ENCODE measurements at regions of chr11 and their contacts with region 1.

Region 1: DNA sequence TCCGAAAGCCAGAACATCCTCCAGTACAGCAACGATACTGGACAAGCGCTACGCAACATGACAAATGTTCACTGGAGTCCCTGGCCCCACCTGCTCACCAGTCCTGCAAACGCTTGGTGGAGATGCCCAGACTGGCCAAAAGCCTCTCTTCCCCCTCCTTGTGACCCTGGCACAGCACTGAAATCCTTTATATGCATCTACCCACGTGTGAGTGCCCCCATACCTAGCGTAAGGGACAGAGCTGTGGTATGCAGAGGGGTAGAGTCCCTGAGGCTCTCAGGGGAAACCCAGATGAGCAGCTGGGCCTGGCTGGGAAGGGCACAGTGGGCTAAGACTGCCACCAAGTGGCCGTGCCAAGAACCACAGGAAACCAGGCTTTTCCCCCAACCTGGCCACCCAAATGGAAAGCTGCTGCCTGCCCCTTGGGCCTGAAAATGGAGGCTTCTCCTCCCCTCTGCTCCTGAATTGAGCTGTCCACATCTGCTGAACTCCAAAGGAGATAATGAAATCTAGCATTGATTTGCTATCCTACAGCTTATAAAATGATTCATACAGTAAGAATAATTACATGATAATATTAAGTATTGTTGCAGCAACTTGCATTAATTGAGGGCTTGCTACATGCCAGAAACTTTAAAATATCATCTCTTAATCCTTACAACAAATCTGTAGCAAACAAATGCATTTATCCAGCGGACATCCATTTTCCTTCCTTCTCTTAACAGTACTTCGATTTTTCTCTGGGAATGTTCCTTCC is 24.8 kb upstream of the TTC12 start:
- DNase-seq: peak; percentile 58
- H3K4me3 Mint-ChIP-seq: no peak overlapping the region
- H3K27ac Mint-ChIP-seq: no peak overlapping the region
- H3K4me1 Mint-ChIP-seq: no peaks in the 10 kb centered on the region
- H3K27me3 Mint-ChIP-seq: peaks cover 38% of the 10 kb centered on the region
- CTCF ChIP-seq: peak; percentile 99

Region 2: GRCh38 chr11:112219476-112220232 is 1070.0 kb before region 1 on chr11:
- CTCF ChIA-PET with region 1: interaction called, 3 read pairs
- POLR2A ChIA-PET with region 1: no interaction called
- intact Hi-C with region 1: loop called (anchors 2 kb)
- DNase-seq: peak; percentile 84
- H3K4me3 Mint-ChIP-seq: no peak overlapping the region
- H3K27ac Mint-ChIP-seq: peak overlapping the region; percentile 21
- H3K4me1 Mint-ChIP-seq: peaks cover 27% of the 10 kb centered on the region
- H3K27me3 Mint-ChIP-seq: no peaks in the 10 kb centered on the region
- CTCF ChIP-seq: peak; percentile 76

Region 3: DNA sequence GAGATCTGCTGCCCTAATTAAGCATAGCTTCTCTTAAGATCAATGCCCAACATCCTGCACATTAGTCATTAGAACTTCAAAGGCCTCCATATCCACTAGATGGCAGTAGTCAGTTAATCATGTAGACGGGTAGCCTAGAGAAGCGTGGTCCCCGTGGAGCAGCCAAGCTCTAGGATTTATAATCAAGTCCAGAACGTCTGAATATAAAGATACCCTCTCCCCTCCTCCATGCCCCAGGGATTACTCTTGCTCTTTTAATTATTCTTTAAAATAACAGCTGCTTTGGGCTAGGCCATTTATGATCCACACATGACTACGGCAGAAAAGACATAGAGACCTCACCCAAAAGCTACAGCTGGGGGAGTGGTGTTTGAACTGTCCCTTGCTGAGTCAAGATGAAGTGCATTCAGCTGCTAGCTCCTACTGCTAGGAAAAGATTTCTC is 701.3 kb before region 1 on chr11:
- CTCF ChIA-PET with region 1: interaction called, 74 read pairs
- POLR2A ChIA-PET with region 1: interaction called, 5 read pairs
- intact Hi-C with region 1: loop called (anchors 1 kb)
- DNase-seq: peak; percentile 88
- H3K4me3 Mint-ChIP-seq: no peak overlapping the region
- H3K27ac Mint-ChIP-seq: no peak overlapping the region
- H3K4me1 Mint-ChIP-seq: no peaks in the 10 kb centered on the region
- H3K27me3 Mint-ChIP-seq: no peaks in the 10 kb centered on the region
- CTCF ChIP-seq: peak; percentile 66

Region 4: GRCh38 chr11:112837162-112837826 is 452.3 kb before region 1 on chr11:
- CTCF ChIA-PET with region 1: interaction called, 7 read pairs
- POLR2A ChIA-PET with region 1: no interaction called
- intact Hi-C with region 1: loop called (anchors 1 kb)
- DNase-seq: peak; percentile 33
- H3K4me3 Mint-ChIP-seq: no peak overlapping the region
- H3K27ac Mint-ChIP-seq: no peak overlapping the region
- H3K4me1 Mint-ChIP-seq: no peaks in the 10 kb centered on the region
- H3K27me3 Mint-ChIP-seq: peaks cover 15% of the 10 kb centered on the region
- CTCF ChIP-seq: peak; percentile 12

Region 5: GRCh38 chr11:113274713-113275582 is 14.7 kb before region 1 on chr11:
- CTCF ChIA-PET with region 1: interaction called, 12 read pairs
- POLR2A ChIA-PET with region 1: no interaction called
- intact Hi-C with region 1: no loop called
- DNase-seq: peak; percentile 23
- H3K4me3 Mint-ChIP-seq: no peak overlapping the region
- H3K27ac Mint-ChIP-seq: no peak overlapping the region
- H3K4me1 Mint-ChIP-seq: no peaks in the 10 kb centered on the region
- H3K27me3 Mint-ChIP-seq: peaks cover 21% of the 10 kb centered on the region
- CTCF ChIP-seq: peak; percentile 18

Region 6: GRCh38 chr11:113457784-113458183 is 168.2 kb after region 1 on chr11:
- CTCF ChIA-PET with region 1: no interaction called
- POLR2A ChIA-PET with region 1: no interaction called
- intact Hi-C with region 1: no loop called
- DNase-seq: no peak
- H3K4me3 Mint-ChIP-seq: no peak overlapping the region
- H3K27ac Mint-ChIP-seq: no peak overlapping the region
- H3K4me1 Mint-ChIP-seq: no peaks in the 10 kb centered on the region
- H3K27me3 Mint-ChIP-seq: no peaks in the 10 kb centered on the region
- CTCF ChIP-seq: no peak

Measured in MCF 10A (cell line).